HCT116 (cell line): ENCODE measurements at regions of chr7 and their contacts with region 1.

Region 1: GRCh38 chr7:88243345-88243909 is 23.6 kb upstream of the SRI start:
- DNase-seq: peak; percentile 60
- ATAC-seq: peak; percentile 93
- H3K4me3 ChIP-seq: no peak overlapping the region
- H3K27ac ChIP-seq: no peak overlapping the region
- H3K4me1 ChIP-seq: no peaks in the 10 kb centered on the region; a peak in 1 of 4 replicates
- H3K27me3 ChIP-seq: no peaks in the 10 kb centered on the region
- CTCF ChIP-seq: peak; percentile 66 to 95 (median 90)
- POLR2A ChIP-seq: no peak
- RAD21 ChIP-seq: peak; percentile 96

Region 2: DNA sequence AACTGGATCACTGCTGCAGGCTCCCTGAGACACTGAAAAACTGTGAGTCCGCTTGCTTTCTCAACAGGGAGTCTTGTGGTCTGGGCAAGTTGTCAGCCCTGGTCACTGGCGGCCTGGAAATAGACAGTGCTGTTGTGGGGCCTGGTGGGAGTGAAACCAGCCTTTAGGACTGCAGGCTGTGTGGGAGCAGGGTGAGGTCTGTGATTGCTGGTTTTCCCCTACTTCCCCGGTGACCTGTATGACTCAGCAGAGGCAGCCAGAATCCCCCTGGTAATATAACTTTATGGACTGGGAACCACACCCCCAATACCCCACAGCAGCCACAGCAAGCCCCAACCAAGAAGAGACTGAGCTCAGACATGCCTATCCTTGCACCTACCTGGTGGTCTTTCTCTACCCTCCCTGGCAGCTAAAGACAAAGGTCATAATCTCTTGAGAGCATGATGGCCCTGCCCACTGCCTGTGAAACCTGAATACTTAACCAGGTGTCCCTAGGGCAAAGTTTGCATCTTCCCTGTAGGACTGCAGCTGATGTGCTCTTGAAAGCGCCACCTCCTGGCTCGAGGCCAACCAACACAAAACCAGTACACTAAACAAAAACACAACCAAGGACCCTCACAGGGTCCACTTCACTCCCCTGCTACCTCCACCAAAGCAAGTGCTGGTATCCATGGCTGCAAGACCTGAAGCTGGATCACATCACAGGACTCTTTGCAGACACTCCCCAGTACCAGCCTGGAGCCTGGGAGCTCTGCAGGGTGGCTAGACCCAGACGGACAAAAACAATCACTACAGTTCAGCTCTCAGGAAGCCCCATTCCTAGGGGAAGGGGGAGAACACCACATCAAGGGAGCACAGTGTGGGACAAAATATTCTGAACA is 316.6 kb before region 1 on chr7:
- CTCF ChIA-PET with region 1: no interaction called
- POLR2A ChIA-PET with region 1: no interaction called
- RAD21 ChIA-PET with region 1: no interaction called
- intact Hi-C with region 1: no loop called
- DNase-seq: no peak
- ATAC-seq: peak; percentile 34; the same call in 1 of the 2 replicates
- H3K4me3 ChIP-seq: no peak overlapping the region
- H3K27ac ChIP-seq: no peak overlapping the region
- H3K4me1 ChIP-seq: peaks cover 5 to 8% of the 10 kb centered on the region in 2 experiments; a peak in 2 of 4 replicates
- H3K27me3 ChIP-seq: no peaks in the 10 kb centered on the region
- CTCF ChIP-seq: no peak
- POLR2A ChIP-seq: no peak
- RAD21 ChIP-seq: no peak

Region 3: GRCh38 chr7:88344956-88345832 is 101.8 kb after region 1 on chr7:
- CTCF ChIA-PET with region 1: interaction called, 19 read pairs
- POLR2A ChIA-PET with region 1: no interaction called
- RAD21 ChIA-PET with region 1: interaction called in 1 of 2 experiments, 3 read pairs
- intact Hi-C with region 1: no loop called
- DNase-seq: peak; percentile 23
- ATAC-seq: peak; percentile 99
- H3K4me3 ChIP-seq: no peak overlapping the region
- H3K27ac ChIP-seq: no peak overlapping the region
- H3K4me1 ChIP-seq: no peaks in the 10 kb centered on the region
- H3K27me3 ChIP-seq: no peaks in the 10 kb centered on the region
- CTCF ChIP-seq: peak; percentile 26 to 66 (median 52); a peak in 5 of 6 replicates
- POLR2A ChIP-seq: no peak
- RAD21 ChIP-seq: peak; percentile 59

Region 4: DNA sequence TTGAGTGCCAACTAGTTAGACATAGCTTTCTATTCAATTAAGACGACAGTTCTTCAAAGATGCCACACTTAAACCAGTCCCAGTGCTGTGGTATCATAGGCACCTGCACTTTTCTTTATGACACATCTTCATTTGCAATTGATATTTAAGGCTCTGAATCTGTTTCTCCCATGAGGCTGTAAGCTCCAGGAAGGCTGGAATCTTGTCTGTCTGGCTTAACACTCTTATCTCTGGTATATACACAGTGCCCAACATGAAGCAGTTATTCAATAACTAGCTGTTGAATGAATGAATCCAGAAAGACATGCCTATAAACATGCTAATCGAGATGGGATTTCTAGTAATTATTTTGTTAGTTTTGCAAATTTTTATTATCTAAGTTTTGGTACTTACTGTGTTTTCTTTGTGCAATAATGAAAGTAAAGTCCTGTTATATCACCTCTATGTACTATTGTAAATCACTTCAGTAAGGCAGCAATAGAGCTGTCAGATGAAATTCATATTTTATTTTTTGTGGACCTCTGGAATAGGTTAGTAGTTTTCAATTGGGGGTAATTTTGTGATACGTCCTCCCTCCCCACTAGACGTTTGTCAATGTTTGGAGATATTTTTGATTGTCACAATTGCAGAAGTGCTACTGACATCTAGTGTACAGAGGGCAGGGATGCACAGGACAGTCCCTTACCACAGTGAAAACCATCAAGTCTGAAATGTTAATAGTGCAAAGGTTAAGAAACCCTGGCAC is 114.5 kb after region 1 on chr7:
- CTCF ChIA-PET with region 1: interaction called, 63 read pairs
- POLR2A ChIA-PET with region 1: no interaction called
- RAD21 ChIA-PET with region 1: interaction called, 10 to 18 read pairs
- intact Hi-C with region 1: loop called (anchors 1 kb)
- DNase-seq: no peak
- ATAC-seq: peak; percentile 79
- H3K4me3 ChIP-seq: no peak overlapping the region
- H3K27ac ChIP-seq: no peak overlapping the region
- H3K4me1 ChIP-seq: no peaks in the 10 kb centered on the region
- H3K27me3 ChIP-seq: no peaks in the 10 kb centered on the region
- CTCF ChIP-seq: peak; percentile 48 to 55 (median 52); a peak in 5 of 6 replicates
- POLR2A ChIP-seq: no peak
- RAD21 ChIP-seq: peak; percentile 65

Region 5: GRCh38 chr7:88546808-88547207 is 303.4 kb after region 1 on chr7:
- CTCF ChIA-PET with region 1: interaction called, 20 read pairs
- POLR2A ChIA-PET with region 1: no interaction called
- RAD21 ChIA-PET with region 1: interaction called, 3 to 4 read pairs
- intact Hi-C with region 1: loop called (anchors 2 kb)
- DNase-seq: peak; percentile 58
- ATAC-seq: peak; percentile 95
- H3K4me3 ChIP-seq: no peak overlapping the region
- H3K27ac ChIP-seq: no peak overlapping the region
- H3K4me1 ChIP-seq: no peaks in the 10 kb centered on the region
- H3K27me3 ChIP-seq: no peaks in the 10 kb centered on the region; the same call in 1 of the 2 replicates
- CTCF ChIP-seq: peak; percentile 64 to 81 (median 67)
- POLR2A ChIP-seq: no peak
- RAD21 ChIP-seq: peak; percentile 89

Region 6: GRCh38 chr7:88789480-88790064 is 546.1 kb after region 1 on chr7:
- CTCF ChIA-PET with region 1: no interaction called
- POLR2A ChIA-PET with region 1: no interaction called
- RAD21 ChIA-PET with region 1: no interaction called
- intact Hi-C with region 1: loop called (anchors 5 kb)
- DNase-seq: peak; percentile 23
- ATAC-seq: peak; percentile 79
- H3K4me3 ChIP-seq: no peak overlapping the region
- H3K27ac ChIP-seq: no peak overlapping the region
- H3K4me1 ChIP-seq: no peaks in the 10 kb centered on the region
- H3K27me3 ChIP-seq: no peaks in the 10 kb centered on the region
- CTCF ChIP-seq: peak; percentile 22 to 63 (median 31); a peak in 4 of 6 replicates
- POLR2A ChIP-seq: no peak
- RAD21 ChIP-seq: peak; percentile 52; the same call in 1 of the 2 replicates

Region 7: DNA sequence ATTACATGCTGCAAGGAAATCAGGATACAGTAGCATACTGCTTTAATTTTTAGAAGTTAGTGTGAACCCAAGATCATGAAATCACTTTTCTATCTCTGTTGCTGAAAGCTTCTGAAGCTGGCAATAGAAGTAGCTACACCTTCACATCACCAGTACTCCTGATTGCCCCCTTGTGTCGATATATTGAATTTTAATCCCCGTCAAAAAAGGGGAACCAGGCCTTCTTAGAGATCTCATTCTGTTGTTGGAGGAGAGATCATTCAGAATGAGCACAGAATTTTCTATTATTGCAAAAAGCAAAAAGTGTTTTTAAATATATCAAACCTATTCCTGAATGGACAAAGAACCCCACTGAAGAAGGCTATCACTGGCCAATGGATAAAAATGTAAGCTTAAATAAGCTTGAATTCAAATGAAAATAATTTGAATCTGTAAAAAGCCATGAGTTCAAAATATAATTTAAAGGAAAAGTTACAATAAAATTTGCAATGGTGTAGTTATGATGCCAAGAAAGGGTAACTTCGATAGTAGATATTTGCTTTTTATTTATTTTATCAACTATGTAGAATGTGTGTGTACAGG is 591.8 kb after region 1 on chr7:
- CTCF ChIA-PET with region 1: interaction called, 22 read pairs
- POLR2A ChIA-PET with region 1: no interaction called
- RAD21 ChIA-PET with region 1: no interaction called
- intact Hi-C with region 1: loop called (anchors 1 kb)
- DNase-seq: peak; percentile 24
- ATAC-seq: no peak; the same call in 1 of the 2 replicates
- H3K4me3 ChIP-seq: no peak overlapping the region
- H3K27ac ChIP-seq: no peak overlapping the region
- H3K4me1 ChIP-seq: no peaks in the 10 kb centered on the region
- H3K27me3 ChIP-seq: no peaks in the 10 kb centered on the region
- CTCF ChIP-seq: peak; percentile 35 to 57 (median 50); a peak in 5 of 6 replicates
- POLR2A ChIP-seq: no peak
- RAD21 ChIP-seq: peak; percentile 48

Region 8: DNA sequence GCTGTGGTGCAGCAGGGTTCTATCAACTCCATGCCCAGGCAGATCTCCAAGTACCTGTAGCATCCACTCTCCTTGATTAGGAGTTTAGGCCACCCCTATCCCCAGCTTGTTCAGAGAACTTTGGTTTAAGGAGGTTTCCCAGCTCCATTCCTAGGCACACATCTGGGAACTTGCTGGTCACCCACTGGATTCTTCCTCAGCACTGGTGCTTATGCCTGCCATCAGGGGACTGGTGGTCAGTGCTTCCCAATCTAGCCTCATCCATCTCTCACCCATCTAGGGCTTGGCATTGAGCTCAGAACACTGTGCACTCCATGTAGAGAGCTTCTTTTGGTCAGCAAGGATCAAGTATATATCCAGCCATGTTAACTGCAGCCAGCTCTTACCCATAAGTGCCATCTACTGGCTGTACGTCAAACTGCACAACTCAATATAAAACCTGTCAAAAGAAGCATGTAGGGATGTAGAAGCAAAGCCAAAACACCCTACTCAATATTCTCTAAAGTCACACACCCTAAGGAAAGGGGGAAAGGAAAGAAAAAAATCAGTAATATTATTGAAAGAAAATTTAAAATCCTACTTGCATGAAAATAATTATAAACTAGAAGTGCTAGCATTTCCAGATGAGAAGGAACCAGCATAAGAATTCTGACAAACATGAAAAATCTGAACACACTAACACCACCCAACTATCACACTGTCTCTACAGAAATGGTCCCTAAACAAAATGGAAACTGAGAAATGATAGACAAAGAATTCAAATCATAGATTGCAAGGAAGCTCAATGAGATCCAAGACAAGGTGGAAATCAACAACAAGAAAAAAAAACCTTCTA is 1379.6 kb after region 1 on chr7:
- CTCF ChIA-PET with region 1: interaction called, 8 read pairs
- POLR2A ChIA-PET with region 1: no interaction called
- RAD21 ChIA-PET with region 1: no interaction called
- intact Hi-C with region 1: loop called (anchors 5 kb)
- DNase-seq: peak; percentile 23
- ATAC-seq: peak; percentile 67
- H3K4me3 ChIP-seq: no peak overlapping the region
- H3K27ac ChIP-seq: no peak overlapping the region
- H3K4me1 ChIP-seq: no peaks in the 10 kb centered on the region
- H3K27me3 ChIP-seq: no peaks in the 10 kb centered on the region
- CTCF ChIP-seq: peak; percentile 24 to 76 (median 71); a peak in 5 of 6 replicates
- POLR2A ChIP-seq: no peak
- RAD21 ChIP-seq: peak; percentile 68